Right ventricle myocardium superior (tissue), 1 donor: ENCODE measurements at regions of chr5 and their contacts with region 1.

Region 1: GRCh38 chr5:153964880-153965645 is 73.6 kb downstream of the FAM114A2 start:
- DNase-seq: no peak
- ATAC-seq: peak; percentile 92

Region 2: GRCh38 chr5:152532714-152533113 is 1432.3 kb before region 1 on chr5:
- intact Hi-C with region 1: loop called (anchors 5 kb)
- DNase-seq: no peak
- ATAC-seq: peak; percentile 48

Region 3: GRCh38 chr5:153496835-153497234 is 468.2 kb before region 1 on chr5:
- intact Hi-C with region 1: loop called (anchors 2 kb)
- DNase-seq: no peak
- ATAC-seq: peak; percentile 49